ENCODE measurements at regions of chr6 and their contacts with region 1.

Region 1: GRCh38 chr6:25017932-25018567 is 82.3 kb upstream of the RIPOR2 start:
- DNase-seq: peak; percentile 71
- H3K4me3 Mint-ChIP-seq: no peak overlapping the region
- H3K27ac Mint-ChIP-seq: peak overlapping the region; percentile 68
- H3K4me1 Mint-ChIP-seq: peaks cover 33% of the 10 kb centered on the region
- H3K27me3 Mint-ChIP-seq: no peaks in the 10 kb centered on the region

Region 2: GRCh38 chr6:24581084-24581669 is 436.9 kb before region 1 on chr6:
- intact Hi-C with region 1: loop called (anchors 5 kb)
- DNase-seq: peak; percentile 52
- H3K4me3 Mint-ChIP-seq: no peak overlapping the region
- H3K27ac Mint-ChIP-seq: no peak overlapping the region
- H3K4me1 Mint-ChIP-seq: peaks cover 5% of the 10 kb centered on the region
- H3K27me3 Mint-ChIP-seq: peaks cover 8% of the 10 kb centered on the region

Region 3: DNA sequence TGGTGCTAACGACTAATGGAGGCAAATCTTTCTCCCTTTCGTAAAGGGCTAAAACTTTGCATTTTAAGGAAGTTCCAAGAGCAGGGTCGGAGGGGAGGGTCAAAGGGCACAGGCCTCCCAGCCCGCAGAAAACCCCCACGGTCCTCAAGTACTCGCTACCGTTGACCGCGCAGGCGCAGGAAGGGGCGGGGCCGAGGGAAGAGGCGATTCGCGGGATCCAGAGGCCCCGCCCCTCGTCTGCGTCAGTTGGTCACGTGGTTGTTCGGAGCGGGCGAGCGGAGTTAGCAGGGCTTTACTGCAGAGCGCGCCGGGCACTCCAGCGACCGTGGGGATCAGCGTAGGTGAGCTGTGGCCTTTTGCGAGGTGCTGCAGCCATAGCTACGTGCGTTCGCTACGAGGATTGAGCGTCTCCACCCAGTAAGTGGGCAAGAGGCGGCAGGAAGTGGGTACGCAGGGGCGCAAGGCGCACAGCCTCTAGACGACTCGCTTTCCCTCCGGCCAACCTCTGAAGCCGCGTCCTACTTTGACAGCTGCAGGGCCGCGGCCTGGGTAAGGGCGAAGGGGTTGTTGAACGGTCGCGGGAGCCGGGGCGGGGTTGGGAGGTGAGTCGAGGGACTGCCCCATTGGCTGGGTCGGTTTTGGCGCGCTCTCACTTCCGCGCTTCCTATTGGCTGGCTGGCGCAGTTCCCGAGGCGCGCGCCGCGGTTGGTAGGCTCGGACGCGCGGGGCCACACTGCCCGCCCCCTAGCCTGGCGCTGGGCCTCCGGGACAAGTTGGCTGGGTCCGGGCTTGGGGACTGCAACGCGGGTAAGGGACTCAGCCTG is 243.1 kb before region 1 on chr6 and contains the start of gene GMNN:
- intact Hi-C with region 1: loop called (anchors 5 kb)
- DNase-seq: peak; percentile 95
- H3K4me3 Mint-ChIP-seq: peak within 1 kb of the TSS; percentile 98
- H3K27ac Mint-ChIP-seq: peak within 1 kb of the TSS; percentile 98
- H3K4me1 Mint-ChIP-seq: peaks cover 30% of the 10 kb centered on the region
- H3K27me3 Mint-ChIP-seq: no peaks in the 10 kb centered on the region
- total RNA-seq, gene GMNN: 68.5 and 71.5 TPM in 2 replicates

Region 4: DNA sequence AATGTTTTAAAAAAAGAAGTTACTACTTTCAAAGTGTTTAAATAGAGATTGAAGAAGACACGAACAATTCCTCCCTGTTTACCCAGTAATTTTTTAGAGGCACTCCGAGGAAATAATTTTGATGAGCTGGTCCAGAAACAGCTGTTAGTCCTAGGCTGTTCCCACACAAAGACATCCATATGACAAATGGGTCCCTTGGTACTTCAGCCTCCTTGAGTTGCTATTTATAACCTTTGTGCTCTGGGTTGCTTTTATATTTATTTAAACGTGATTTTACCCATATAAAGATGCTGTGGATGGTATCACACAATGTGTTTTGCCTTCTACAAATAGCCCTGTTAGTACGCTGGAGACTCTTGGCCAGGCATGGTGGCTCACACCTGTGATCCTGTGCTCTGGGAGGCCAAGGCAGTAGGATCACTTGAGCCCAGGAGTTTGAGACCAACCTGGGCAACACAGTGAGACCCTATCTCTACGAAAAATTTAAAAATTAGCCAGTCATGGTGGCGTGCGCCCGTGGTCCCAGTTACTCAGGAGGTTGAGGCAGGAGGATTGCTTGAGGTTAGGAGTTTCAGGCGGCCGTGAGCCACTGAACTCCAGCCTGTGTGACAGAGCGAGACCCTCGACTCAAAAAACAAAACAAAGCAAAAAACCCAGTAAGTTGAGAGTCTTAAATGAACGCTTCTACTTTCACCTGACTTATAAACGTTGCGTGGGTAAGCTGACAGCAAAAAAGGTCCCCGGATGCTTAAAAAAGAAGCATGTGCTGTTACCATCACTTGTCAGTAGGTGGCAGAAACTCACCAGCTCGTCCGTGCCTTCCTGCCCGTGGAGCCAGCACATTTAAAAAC is 162.4 kb before region 1 on chr6:
- intact Hi-C with region 1: loop called (anchors 1 kb)
- DNase-seq: peak; percentile 57
- H3K4me3 Mint-ChIP-seq: no peak overlapping the region
- H3K27ac Mint-ChIP-seq: peak overlapping the region; percentile 31
- H3K4me1 Mint-ChIP-seq: peaks cover 49% of the 10 kb centered on the region
- H3K27me3 Mint-ChIP-seq: no peaks in the 10 kb centered on the region

Region 5: DNA sequence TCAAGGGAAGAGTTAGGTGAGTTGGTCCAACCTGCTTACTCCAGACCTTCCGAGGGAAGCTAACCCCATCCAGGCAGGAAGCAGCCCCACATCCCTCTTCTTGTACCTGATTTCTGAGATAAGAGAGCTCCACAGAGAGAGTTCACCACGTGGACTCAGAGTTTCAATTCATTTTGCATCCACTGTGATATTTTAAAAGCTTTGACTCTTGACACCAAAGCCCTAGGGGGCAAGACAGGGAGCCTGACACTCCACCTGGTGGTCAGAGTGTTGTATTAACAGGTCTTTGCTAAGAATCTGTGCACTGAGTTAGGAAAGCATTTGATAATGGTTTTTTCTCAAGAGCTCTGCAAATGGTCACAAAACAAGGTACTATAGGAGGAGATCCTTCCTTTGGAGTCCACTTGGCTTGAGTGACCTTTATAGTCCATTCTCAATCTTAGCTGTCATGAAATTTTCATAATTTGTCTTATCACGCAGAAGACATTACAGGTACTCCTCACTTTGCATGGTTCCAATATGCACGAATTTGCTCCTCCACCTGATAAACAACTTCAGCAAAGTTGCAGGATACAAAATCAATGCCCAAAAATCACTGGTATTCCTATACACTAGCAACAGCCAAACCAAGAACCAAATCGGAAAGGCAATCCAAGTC is 26.1 kb before region 1 on chr6:
- intact Hi-C with region 1: loop called (anchors 2 kb)
- DNase-seq: peak; percentile 59
- H3K4me3 Mint-ChIP-seq: no peak overlapping the region
- H3K27ac Mint-ChIP-seq: peak overlapping the region; percentile 33
- H3K4me1 Mint-ChIP-seq: peaks cover 30% of the 10 kb centered on the region
- H3K27me3 Mint-ChIP-seq: no peaks in the 10 kb centered on the region

Region 6: GRCh38 chr6:25006565-25007001 is 11.5 kb before region 1 on chr6:
- intact Hi-C with region 1: loop called (anchors 1 kb)
- DNase-seq: peak; percentile 41
- H3K4me3 Mint-ChIP-seq: peak overlapping the region; percentile 27
- H3K27ac Mint-ChIP-seq: peak overlapping the region; percentile 83
- H3K4me1 Mint-ChIP-seq: peaks cover 68% of the 10 kb centered on the region
- H3K27me3 Mint-ChIP-seq: no peaks in the 10 kb centered on the region

Measured in activated T-helper 2 cell treated with anti-CD3 and anti-CD28 coated beads, Interferon-gamma antibody, Interleukin-2, Interleukin-4, amounts not matched to agents 10 μg/mL and 5 μg/mL and 100 μg/mL, durations not matched to agents 14 hours and 24 hours and 36 hours (primary cell).